CD8-positive, alpha-beta T cell (primary cell): ENCODE measurements at regions of chr11 and their contacts with region 1.

Region 1: GRCh38 chr11:72030472-72031045 is 31.9 kb downstream of the IL18BP start:
- DNase-seq: no peak
- ATAC-seq: no peak
- H3K4me3 ChIP-seq: no peak overlapping the region
- H3K4me3 Mint-ChIP-seq: no peak overlapping the region
- H3K27ac ChIP-seq: peak overlapping the region in 1 of 2 experiments; percentile 0
- H3K27ac Mint-ChIP-seq: peak overlapping the region; percentile 64
- H3K4me1 ChIP-seq: peaks cover 38% of the 10 kb centered on the region
- H3K4me1 Mint-ChIP-seq: peaks cover 71% of the 10 kb centered on the region
- H3K27me3 ChIP-seq: no peaks in the 10 kb centered on the region
- H3K27me3 Mint-ChIP-seq: no peaks in the 10 kb centered on the region
- CTCF ChIP-seq: no peak

Region 2: DNA sequence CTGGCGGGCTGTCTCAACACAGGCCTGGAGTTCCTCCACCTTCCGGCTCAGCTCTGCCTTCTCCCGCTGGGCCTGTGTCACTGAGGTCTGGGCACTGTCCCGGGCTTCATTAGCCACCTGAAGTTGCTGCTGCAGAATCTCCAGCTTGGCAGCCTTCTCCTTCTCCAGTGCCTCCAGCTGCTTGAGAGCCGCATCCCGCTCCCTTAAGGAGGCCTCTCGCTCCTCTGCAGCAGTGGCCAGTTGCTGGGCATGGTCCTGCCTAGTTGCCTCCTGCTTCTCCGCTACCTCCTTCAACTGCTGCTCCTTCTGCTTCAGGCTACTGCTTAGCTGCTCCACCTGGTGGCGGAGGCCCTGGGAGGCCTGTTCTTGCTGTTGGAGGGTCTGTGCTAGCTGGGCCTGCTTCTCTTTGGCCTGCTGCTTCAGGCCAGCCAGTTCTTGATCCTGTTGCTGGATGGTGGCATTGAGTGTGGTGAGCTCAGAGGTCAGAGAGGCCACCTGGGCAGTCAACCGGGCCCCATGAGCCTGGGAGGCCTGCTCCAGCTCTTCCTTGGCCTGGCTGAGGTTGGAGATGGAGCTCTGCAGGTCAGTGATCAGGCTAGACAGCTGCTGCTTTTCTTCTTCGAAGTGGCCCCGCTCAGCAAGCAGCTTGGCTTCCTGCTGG is 14.9 kb before region 1 on chr11:
- CTCF ChIA-PET with region 1: interaction called, 48 read pairs
- POLR2A ChIA-PET with region 1: no interaction called
- intact Hi-C with region 1: no loop called
- DNase-seq: peak in 1 of 9 experiments; percentile 26
- ATAC-seq: no peak
- H3K4me3 ChIP-seq: no peak overlapping the region
- H3K4me3 Mint-ChIP-seq: no peak overlapping the region
- H3K27ac ChIP-seq: no peak overlapping the region
- H3K27ac Mint-ChIP-seq: no peak overlapping the region
- H3K4me1 ChIP-seq: no peaks in the 10 kb centered on the region
- H3K4me1 Mint-ChIP-seq: peaks cover 1% of the 10 kb centered on the region
- H3K27me3 ChIP-seq: no peaks in the 10 kb centered on the region
- H3K27me3 Mint-ChIP-seq: no peaks in the 10 kb centered on the region
- CTCF ChIP-seq: no peak

Region 3: DNA sequence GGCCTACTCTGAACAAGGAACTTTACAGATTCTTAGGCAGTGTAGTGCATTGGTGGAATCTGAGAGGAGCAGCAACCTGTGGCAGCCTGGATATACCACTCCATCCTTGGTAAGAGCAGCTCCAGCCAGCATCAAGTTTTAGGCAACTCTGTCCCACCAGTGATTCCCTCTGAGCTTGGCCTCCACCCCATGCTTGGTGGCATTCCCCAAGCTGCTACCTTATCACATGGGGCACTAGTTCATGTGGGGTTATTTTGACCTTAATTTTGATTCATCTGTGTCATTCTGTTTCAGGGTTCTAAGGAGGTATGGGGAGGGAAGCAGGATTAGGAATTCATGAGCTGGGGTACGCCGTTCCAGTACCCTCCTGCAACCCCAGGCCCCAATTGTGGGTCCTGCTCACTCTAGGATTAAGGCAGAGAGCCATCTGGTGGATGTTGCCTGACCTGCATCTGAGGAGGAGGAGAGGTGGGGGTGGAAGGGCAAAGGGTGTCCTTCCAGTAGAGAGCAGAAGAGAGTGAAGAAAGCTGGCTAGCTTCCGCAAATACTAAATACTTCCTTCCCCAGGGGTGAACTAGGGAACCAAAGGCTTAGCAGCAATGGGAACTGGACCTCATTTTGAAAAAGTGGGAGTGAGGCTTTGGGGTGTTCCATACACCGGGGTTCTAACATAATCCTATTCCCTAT is 60.6 kb after region 1 on chr11:
- CTCF ChIA-PET with region 1: interaction called, 436 read pairs
- POLR2A ChIA-PET with region 1: interaction called, 4 read pairs
- intact Hi-C with region 1: loop called (anchors 1 kb)
- DNase-seq: peak; percentile 50 to 80 (median 73)
- ATAC-seq: peak; percentile 99
- H3K4me3 ChIP-seq: no peak overlapping the region
- H3K4me3 Mint-ChIP-seq: no peak overlapping the region
- H3K27ac ChIP-seq: no peak overlapping the region
- H3K27ac Mint-ChIP-seq: peak overlapping the region; percentile 70
- H3K4me1 ChIP-seq: no peaks in the 10 kb centered on the region
- H3K4me1 Mint-ChIP-seq: peaks cover 12% of the 10 kb centered on the region
- H3K27me3 ChIP-seq: no peaks in the 10 kb centered on the region
- H3K27me3 Mint-ChIP-seq: no peaks in the 10 kb centered on the region
- CTCF ChIP-seq: peak; percentile 74

Region 4: DNA sequence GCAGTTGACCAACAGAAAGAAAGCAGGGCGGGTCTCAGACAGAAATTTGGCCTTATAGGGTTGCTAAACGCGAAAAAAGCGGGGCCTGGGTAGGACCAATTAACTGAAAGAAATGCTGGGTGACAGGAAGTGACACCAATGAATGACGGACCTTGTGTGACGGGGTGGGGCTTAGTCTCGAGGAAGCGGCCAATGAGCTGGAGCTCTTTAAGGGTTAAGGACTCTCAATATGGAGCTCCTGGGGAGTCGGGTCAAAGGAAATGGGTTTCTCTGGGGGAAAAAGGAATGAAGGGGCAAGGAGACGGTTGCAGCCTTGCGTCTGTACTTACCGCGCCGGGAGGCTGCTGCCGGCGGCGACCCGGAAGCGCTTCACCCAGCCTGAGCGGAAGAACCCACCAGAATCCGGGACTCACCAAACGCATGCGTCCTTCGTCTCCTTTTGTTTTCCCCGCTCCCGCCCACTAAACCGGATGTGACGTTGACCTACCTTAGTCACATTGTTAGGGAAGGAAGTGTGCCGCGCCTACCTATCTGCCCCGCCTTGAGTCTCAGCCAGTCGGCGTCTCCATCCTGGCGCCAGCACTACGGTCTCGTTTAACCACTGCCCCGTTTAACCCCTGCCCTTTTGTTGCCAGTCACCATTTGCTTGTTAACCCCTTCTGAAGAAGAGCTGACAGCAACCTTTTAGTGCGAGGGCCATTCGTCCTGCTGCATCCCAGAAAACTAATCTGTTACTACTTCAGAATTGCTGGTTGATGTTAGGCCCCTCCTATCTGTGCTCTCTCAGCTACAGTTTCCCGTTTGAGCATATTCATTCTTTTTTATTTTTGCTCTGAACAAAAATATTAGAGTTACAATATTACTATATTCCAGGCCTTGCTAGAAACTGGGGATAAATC is 82.0 kb after region 1 on chr11 and contains the start of gene ANAPC15:
- CTCF ChIA-PET with region 1: interaction called, 7 read pairs
- POLR2A ChIA-PET with region 1: interaction called, 3 read pairs
- intact Hi-C with region 1: loop called in 1 of 2 experiments (anchors 1 kb)
- DNase-seq: peak; percentile 95 to 100 (median 98)
- ATAC-seq: peak; percentile 85
- H3K4me3 ChIP-seq: peak within 1 kb of the TSS; percentile 63 to 65
- H3K4me3 Mint-ChIP-seq: peak within 1 kb of the TSS; percentile 96
- H3K27ac ChIP-seq: peak within 1 kb of the TSS; percentile 88 to 94
- H3K27ac Mint-ChIP-seq: peak within 1 kb of the TSS; percentile 99
- H3K4me1 ChIP-seq: peaks cover 16% of the 10 kb centered on the region
- H3K4me1 Mint-ChIP-seq: peaks cover 23% of the 10 kb centered on the region
- H3K27me3 ChIP-seq: no peaks in the 10 kb centered on the region
- H3K27me3 Mint-ChIP-seq: peaks cover 4% of the 10 kb centered on the region
- CTCF ChIP-seq: no peak
- total RNA-seq, gene ANAPC15: 42.1 to 46.2 TPM

Region 5: GRCh38 chr11:72179804-72180396 is 149.3 kb after region 1 on chr11:
- CTCF ChIA-PET with region 1: interaction called, 7 read pairs
- POLR2A ChIA-PET with region 1: no interaction called
- intact Hi-C with region 1: loop called (anchors 1 kb)
- DNase-seq: no peak
- ATAC-seq: no peak
- H3K4me3 ChIP-seq: no peak overlapping the region
- H3K4me3 Mint-ChIP-seq: no peak overlapping the region
- H3K27ac ChIP-seq: no peak overlapping the region
- H3K27ac Mint-ChIP-seq: no peak overlapping the region
- H3K4me1 ChIP-seq: no peaks in the 10 kb centered on the region
- H3K4me1 Mint-ChIP-seq: peaks cover 2% of the 10 kb centered on the region
- H3K27me3 ChIP-seq: no peaks in the 10 kb centered on the region
- H3K27me3 Mint-ChIP-seq: peaks cover 8% of the 10 kb centered on the region
- CTCF ChIP-seq: no peak

Region 6: DNA sequence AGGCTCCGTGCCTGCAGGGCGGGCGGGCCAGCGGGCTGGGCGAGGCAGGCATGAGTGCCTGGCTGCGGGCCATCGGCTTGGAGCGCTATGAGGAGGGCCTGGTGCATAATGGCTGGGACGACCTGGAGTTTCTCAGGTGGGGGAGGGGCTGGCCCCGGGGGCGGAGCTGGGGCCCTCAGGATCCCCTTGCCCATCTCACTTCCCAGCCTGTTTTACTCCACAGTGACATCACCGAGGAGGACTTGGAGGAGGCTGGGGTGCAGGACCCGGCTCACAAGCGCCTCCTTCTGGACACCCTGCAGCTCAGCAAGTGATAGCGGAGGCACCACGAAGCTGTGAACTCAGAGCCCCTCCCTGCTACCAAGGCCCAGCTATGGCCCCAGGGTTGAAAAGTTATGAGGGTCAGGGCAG is 207.5 kb after region 1 on chr11:
- CTCF ChIA-PET with region 1: no interaction called
- POLR2A ChIA-PET with region 1: no interaction called
- intact Hi-C with region 1: loop called in 1 of 2 experiments (anchors 5 kb)
- DNase-seq: peak in 6 of 9 experiments; percentile 14 to 67 (median 52)
- ATAC-seq: peak; percentile 77
- H3K4me3 ChIP-seq: no peak overlapping the region
- H3K4me3 Mint-ChIP-seq: no peak overlapping the region
- H3K27ac ChIP-seq: no peak overlapping the region
- H3K27ac Mint-ChIP-seq: no peak overlapping the region
- H3K4me1 ChIP-seq: peaks cover 17% of the 10 kb centered on the region
- H3K4me1 Mint-ChIP-seq: peaks cover 23% of the 10 kb centered on the region
- H3K27me3 ChIP-seq: peaks cover 22 to 34% of the 10 kb centered on the region in 2 experiments
- H3K27me3 Mint-ChIP-seq: peaks cover 30% of the 10 kb centered on the region
- CTCF ChIP-seq: peak; percentile 41